ENCODE measurements at regions of chr3 and their contacts with region 1.

Region 1: DNA sequence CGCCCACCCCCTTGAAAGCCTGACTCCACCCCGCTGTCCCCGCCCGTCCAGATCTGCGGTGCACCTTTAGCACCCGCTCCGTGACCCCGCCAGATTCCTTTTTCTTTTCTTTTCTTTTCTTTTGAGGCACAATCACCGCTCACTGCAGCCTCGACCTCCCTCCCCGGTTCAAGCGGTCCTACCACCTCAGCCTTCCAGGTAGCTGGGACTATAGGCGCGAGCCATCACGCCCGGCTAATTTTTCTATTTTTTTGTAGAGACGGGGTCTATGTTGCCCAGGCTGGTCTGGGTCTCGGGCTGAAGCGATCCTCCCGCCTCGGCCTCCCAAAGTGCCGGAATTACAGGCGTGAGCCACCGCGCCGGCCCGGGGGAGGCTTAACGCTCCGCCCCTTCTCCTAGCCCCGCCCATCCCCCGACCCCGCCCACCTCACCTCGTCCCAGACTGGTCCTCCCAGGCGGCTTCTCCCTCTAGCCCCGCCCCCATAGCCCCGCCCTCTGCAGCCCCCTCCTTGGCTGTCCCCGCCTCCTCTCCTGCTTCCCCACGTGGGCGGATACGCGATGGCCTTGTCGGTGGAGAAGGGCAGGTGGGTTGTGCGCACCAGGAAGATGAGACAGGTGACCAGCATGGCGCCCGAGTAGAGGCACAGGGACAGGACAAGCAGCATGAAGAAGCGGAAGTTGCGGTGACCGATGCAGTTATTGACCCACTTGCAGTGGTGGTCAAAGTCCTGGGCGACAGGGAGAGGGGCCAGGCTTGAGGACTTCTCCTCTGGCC is 3.2 kb downstream of the ZDHHC19 start:
- DNase-seq: peak; percentile 86
- ATAC-seq: peak; percentile 77
- H3K4me3 Mint-ChIP-seq: peak overlapping the region; percentile 74
- H3K27ac Mint-ChIP-seq: peak overlapping the region; percentile 29
- H3K4me1 Mint-ChIP-seq: peaks cover 11% of the 10 kb centered on the region
- H3K27me3 Mint-ChIP-seq: no peaks in the 10 kb centered on the region

Region 2: GRCh38 chr3:195692354-195692685 is 515.7 kb before region 1 on chr3:
- CTCF ChIA-PET with region 1: no interaction called
- POLR2A ChIA-PET with region 1: no interaction called
- intact Hi-C with region 1: loop called in 1 of 2 experiments (anchors 2 kb)
- DNase-seq: no peak
- ATAC-seq: no peak
- H3K4me3 Mint-ChIP-seq: no peak overlapping the region
- H3K27ac Mint-ChIP-seq: peak overlapping the region; percentile 63
- H3K4me1 Mint-ChIP-seq: peaks cover 18% of the 10 kb centered on the region
- H3K27me3 Mint-ChIP-seq: no peaks in the 10 kb centered on the region

Region 3: GRCh38 chr3:195748661-195749060 is 459.4 kb before region 1 on chr3:
- CTCF ChIA-PET with region 1: no interaction called
- POLR2A ChIA-PET with region 1: no interaction called
- intact Hi-C with region 1: loop called in 1 of 2 experiments (anchors 5 kb)
- DNase-seq: no peak
- ATAC-seq: no peak
- H3K4me3 Mint-ChIP-seq: no peak overlapping the region
- H3K27ac Mint-ChIP-seq: no peak overlapping the region
- H3K4me1 Mint-ChIP-seq: peaks cover 9% of the 10 kb centered on the region
- H3K27me3 Mint-ChIP-seq: peaks cover 3% of the 10 kb centered on the region